Left ventricle myocardium superior (tissue), 1 donor: ENCODE measurements at regions of chr1 and their contacts with region 1.

Region 1: DNA sequence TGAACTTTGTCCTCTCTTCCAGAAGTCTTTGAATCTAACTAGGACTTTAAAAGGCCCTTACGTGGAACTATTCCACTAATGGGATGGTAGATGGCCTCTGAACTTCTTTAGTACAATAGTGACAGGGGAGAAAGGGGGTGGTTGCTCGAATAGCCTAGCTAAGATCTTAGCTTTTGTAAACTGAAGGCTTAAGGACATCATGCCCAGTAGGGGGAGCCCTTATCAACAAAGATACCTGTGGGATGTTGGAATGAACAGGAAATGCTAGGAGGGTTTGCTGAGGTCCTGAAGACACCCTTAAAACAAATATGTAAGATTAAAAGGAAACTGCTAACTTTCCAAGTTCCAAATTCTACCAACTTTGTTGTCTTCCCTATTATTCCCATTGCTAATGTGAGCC is 33.2 kb downstream of the NHLH2 start:
- DNase-seq: no peak
- ATAC-seq: peak; percentile 73

Region 2: DNA sequence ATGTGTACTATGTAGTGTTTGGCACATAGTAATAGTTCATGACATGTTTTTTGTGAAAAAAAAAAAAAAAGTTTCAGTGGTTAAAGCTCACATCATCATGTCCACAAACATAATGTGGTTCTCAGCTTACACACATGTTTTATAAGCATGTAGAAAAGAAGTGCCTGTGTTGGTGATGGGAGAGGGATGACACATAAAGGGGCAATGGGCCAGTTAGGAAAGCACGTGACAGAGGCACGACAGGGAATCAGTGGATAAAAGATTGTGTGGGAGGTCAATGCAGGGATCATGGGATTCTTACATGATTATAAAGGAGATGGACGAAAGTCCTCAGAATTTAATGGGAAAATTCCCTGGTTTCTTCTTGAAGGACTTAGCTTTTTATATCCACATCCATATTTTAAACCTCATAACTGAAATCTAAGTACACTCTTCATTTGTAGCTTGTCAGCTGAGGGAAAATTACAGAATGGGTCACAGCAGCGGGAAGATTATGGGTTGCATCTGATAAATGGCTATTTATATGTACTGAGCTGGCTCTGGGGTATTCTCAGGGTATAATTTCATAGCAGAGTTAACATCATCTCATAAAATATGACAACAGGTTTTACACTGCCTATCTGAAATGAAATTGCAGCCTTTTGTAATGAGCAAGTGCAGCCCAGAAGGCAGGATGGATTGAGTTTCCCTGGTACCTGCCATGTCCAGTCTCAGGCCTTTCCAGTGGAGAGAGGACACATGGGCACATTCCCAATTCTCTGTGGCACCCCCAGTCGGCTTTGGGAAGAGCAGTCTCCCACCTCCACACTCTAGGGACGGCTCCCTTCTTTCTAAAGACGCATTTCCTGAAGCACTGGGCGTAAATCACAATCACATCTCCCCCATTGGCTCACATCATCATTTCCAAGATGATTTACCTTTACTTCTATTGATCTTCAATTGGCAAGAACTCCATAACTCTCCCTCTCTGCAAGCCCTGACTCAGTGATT is 75.5 kb after region 1 on chr1:
- intact Hi-C with region 1: no loop called
- DNase-seq: no peak
- ATAC-seq: no peak

Region 3: GRCh38 chr1:115980998-115981993 is 173.6 kb after region 1 on chr1:
- intact Hi-C with region 1: loop called (anchors 2 kb)
- DNase-seq: no peak
- ATAC-seq: peak; percentile 27

Region 4: GRCh38 chr1:116020668-116021275 is 213.0 kb after region 1 on chr1:
- intact Hi-C with region 1: loop called (anchors 5 kb)
- DNase-seq: peak; percentile 58
- ATAC-seq: peak; percentile 70